IMR-90 (cell line): ENCODE measurements at regions of chr12 and their contacts with region 1.

Region 1: DNA sequence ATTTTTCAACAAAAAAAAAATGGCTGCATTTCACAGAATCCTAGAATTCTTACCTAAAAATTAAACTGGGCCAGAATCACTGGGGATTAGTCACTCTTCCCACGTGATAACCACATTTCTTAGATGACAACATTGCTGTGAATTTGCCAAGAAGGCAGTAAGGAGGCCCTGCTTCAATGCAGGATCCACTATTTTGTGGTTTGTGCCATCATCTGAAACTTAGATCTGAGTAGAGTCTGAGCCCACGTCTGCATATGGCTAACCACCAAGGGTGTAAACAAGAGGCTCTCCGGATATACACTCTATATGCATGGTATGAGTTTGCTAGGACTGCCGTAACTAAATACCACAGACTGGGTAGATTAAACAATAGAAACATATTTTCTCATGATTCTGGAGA is 24.4 kb upstream of the TBX5 start:
- DNase-seq: peak; percentile 100
- ATAC-seq: peak; percentile 93
- H3K4me3 ChIP-seq: no peak overlapping the region
- H3K27ac ChIP-seq: peak overlapping the region; percentile 60; the same call in 1 of the 2 replicates
- H3K4me1 ChIP-seq: peaks cover 4% of the 10 kb centered on the region
- H3K27me3 ChIP-seq: no peaks in the 10 kb centered on the region
- CTCF ChIP-seq: no peak
- POLR2A ChIP-seq: no peak
- RAD21 ChIP-seq: peak; percentile 6; the same call in 1 of the 2 replicates

Region 2: GRCh38 chr12:114457620-114458019 is 27.3 kb after region 1 on chr12:
- CTCF ChIA-PET with region 1: no interaction called
- POLR2A ChIA-PET with region 1: no interaction called
- dilution Hi-C with region 1: no loop called
- in situ Hi-C with region 1: no loop called
- intact Hi-C with region 1: loop called (anchors 1 kb)
- DNase-seq: no peak
- ATAC-seq: peak; percentile 40
- H3K4me3 ChIP-seq: no peak overlapping the region
- H3K27ac ChIP-seq: no peak overlapping the region
- H3K4me1 ChIP-seq: peaks cover 5% of the 10 kb centered on the region; the same call in 1 of the 2 replicates
- H3K27me3 ChIP-seq: peaks cover 16% of the 10 kb centered on the region
- CTCF ChIP-seq: no peak
- POLR2A ChIP-seq: no peak
- RAD21 ChIP-seq: no peak

Region 3: GRCh38 chr12:114817571-114818425 is 387.5 kb after region 1 on chr12:
- CTCF ChIA-PET with region 1: no interaction called
- POLR2A ChIA-PET with region 1: no interaction called
- dilution Hi-C with region 1: no loop called
- in situ Hi-C with region 1: no loop called
- intact Hi-C with region 1: no loop called
- DNase-seq: no peak
- ATAC-seq: no peak
- H3K4me3 ChIP-seq: no peak overlapping the region
- H3K27ac ChIP-seq: no peak overlapping the region
- H3K4me1 ChIP-seq: peaks cover 2% of the 10 kb centered on the region
- H3K27me3 ChIP-seq: no peaks in the 10 kb centered on the region
- CTCF ChIP-seq: no peak
- POLR2A ChIP-seq: no peak
- RAD21 ChIP-seq: no peak